ENCODE measurements at regions of chr11 and their contacts with region 1.

Region 1: DNA sequence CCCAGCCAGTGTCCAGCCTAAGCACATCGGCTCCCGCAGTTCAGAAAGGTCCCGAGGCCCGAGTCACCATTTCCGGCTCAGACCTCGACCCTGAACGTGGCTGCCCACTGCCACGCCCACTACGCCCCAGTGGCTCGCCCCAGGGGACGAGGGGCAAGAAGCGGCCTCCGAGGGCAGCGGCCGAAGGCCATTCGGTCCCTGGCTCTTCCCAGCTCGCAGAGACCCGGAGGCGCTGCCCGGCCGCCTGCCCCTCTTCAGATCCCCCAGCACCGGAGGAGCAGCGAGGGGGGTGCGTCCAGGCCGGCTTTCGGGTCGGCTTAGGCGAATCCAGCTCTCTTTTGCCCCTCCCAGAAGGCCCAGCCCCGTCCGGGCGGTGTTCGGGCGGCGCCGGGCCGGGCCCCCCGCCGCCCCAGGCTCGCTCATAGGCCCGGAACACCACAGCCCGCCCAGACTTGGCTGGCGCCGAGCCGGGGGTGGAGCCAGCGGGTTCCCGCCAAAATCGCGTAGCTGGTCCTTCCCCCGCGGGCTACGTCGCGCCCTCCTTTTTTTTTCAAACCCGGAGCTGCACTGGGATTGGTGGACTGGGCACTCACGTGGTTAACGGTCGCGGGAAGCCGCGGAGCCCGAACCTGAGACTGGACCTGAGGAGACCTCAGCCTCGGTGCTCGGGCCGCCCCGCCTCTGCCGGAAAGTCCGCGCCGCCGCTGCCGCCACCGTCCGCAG is at the start of gene WEE1:
- DNase-seq: peak; percentile 98 to 99 (median 98)
- H3K4me3 ChIP-seq: peak within 1 kb of the TSS; percentile 16 to 92 (median 50)
- H3K27ac ChIP-seq: peak within 1 kb of the TSS; percentile 83 to 96 (median 92)
- H3K4me1 ChIP-seq: peaks cover 0 to 25% of the 10 kb centered on the region in 2 donors
- H3K27me3 ChIP-seq: no peaks in the 10 kb centered on the region
- CTCF ChIP-seq: no peak
- POLR2A ChIP-seq: peak; percentile 54 to 70
- total RNA-seq, gene WEE1: 3.3 to 33.8 (median 10.0) TPM

Region 2: GRCh38 chr11:9527481-9528140 is 45.6 kb before region 1 on chr11:
- intact Hi-C with region 1: loop called in 1 of 2 experiments (anchors 10 kb)
- DNase-seq: peak in 5 of 7 donors; percentile 20 to 51 (median 47)
- H3K4me3 ChIP-seq: no peak overlapping the region
- H3K27ac ChIP-seq: peak overlapping the region in 3 of 5 donors; percentile 36 to 42 (median 41)
- H3K4me1 ChIP-seq: peaks cover 21 to 33% of the 10 kb centered on the region in 2 donors
- H3K27me3 ChIP-seq: no peaks in the 10 kb centered on the region
- CTCF ChIP-seq: no peak
- POLR2A ChIP-seq: no peak

Region 3: DNA sequence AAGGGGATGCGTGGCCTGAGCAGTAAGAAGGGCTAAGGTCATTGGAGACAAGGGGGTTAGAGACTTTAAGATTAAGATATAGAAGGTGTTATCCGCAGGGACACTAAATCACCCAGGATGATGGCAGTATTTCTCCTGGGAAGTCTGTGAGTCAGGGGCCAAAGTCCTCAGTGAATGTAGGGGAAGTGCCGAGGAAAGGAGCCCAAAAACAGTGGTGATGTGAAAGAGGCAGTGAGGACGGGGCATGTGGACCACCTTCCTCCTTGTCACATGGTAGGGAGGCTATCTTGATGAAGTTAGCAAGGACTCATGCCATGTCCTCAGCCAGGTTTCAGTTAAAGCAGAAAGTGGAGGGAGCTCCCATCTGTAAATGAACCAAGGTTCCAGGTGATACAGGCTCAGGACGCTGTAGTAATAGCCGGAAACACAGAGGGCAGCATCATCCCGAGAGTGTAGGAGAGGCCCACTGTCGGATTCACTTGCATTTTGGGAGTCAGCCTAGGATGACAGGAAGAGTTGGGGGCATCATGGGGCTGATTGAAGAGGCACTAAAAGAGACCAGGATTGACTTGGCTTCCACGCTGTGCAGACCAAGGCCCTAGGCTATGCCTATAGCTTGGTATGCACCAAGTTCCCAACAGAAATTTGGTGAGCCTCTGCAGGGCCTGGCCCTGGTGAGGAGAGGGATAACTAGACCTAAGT is 33.7 kb after region 1 on chr11:
- intact Hi-C with region 1: loop called in 1 of 2 experiments (anchors 5 kb)
- DNase-seq: no peak
- H3K4me3 ChIP-seq: no peak overlapping the region
- H3K27ac ChIP-seq: no peak overlapping the region
- H3K4me1 ChIP-seq: no peaks in the 10 kb centered on the region
- H3K27me3 ChIP-seq: no peaks in the 10 kb centered on the region
- CTCF ChIP-seq: no peak
- POLR2A ChIP-seq: no peak

Region 4: DNA sequence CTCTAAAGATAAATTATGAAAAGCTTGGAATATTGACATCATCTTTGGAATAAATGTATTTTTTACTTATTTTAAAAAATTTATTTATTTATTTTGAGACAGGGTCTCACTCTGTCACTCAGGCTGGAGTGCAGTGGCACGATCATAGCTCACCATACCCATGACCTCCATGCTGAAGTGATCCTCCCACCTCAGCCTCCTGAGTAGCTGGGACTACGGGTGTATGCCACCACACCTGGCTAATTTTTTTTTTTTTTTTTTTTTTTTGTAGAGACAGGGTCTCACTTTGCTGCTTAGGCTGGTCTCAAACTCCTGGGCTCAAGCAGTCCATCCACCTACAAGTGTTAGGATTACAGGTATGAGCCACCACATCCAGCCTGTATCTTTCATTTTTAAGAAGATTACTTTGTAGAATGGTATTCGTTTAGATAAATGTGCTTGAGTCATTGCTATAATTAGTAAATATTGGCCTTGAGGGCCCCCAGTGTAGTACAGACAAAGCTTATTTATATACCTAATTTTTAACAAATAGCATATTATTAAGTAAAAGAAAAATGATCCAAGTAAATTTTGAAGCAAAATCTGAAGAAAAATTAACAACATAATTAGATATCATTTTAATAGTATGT is 99.2 kb after region 1 on chr11:
- intact Hi-C with region 1: no loop called
- DNase-seq: no peak
- H3K4me3 ChIP-seq: no peak overlapping the region
- H3K27ac ChIP-seq: no peak overlapping the region
- H3K4me1 ChIP-seq: peaks cover 0 to 16% of the 10 kb centered on the region in 2 donors
- H3K27me3 ChIP-seq: no peaks in the 10 kb centered on the region
- CTCF ChIP-seq: no peak
- POLR2A ChIP-seq: no peak